GM13976 (cell line): ENCODE measurements at regions of chr6 and their contacts with region 1.

Region 1: DNA sequence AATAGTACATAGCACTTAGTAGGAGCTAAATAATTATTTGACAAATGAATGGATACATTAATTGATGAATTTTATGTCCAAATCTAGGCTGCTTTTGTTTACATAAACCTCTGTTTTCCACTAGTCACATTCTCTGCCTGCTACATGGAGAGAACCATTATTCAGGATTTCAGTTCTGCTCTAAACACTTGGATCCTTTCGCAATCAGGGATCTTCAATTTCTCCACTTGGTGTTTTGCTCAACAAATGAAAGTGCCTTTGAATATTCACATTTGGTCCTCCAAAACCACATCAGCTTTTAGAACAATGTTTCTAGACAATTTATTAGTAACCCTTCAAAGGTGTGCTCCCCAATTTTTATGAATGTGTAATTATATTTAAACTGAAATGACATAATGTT is 30.6 kb upstream of the HLA-DQB1 start:
- DNase-seq: no peak
- CTCF ChIP-seq: no peak

Region 2: GRCh38 chr6:32439602-32440214 is 257.3 kb before region 1 on chr6 and contains the start of gene HLA-DRA:
- in situ Hi-C with region 1: loop called (anchors 5 kb)
- DNase-seq: peak; percentile 81
- CTCF ChIP-seq: no peak